ENCODE measurements at regions of chr1 and their contacts with region 1.

Region 1: DNA sequence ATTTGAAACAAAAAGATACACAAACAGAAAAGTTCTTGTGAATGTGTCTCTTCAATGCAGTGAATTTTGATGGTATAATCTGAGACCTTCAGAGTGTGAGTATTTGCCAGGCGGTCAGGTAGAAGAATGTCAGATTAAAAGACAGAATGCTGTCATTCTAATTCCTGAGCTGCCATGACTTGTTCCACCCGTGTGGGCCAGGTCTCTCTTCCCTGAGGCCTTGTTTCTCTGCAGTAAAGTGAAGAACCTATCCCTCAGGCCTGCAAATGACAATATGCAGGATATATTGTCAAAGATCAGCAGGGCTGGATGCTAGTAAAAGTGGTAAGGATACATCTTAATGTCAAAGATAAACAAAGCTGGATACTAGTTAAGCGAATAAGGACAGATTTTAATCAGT is 111.4 kb downstream of the ZP4 start:
- DNase-seq: no peak
- H3K4me3 ChIP-seq: no peak overlapping the region
- H3K27ac ChIP-seq: no peak overlapping the region
- H3K4me1 ChIP-seq: no peaks in the 10 kb centered on the region
- H3K27me3 ChIP-seq: no peaks in the 10 kb centered on the region
- CTCF ChIP-seq: no peak
- EP300 ChIP-seq: no peak
- POLR2A ChIP-seq: no peak

Region 2: GRCh38 chr1:237737938-237738610 is 41.3 kb before region 1 on chr1:
- intact Hi-C with region 1: loop called in 1 of 4 experiments (anchors 2 kb)
- DNase-seq: no peak
- H3K4me3 ChIP-seq: no peak overlapping the region
- H3K27ac ChIP-seq: no peak overlapping the region
- H3K4me1 ChIP-seq: no peaks in the 10 kb centered on the region
- H3K27me3 ChIP-seq: no peaks in the 10 kb centered on the region
- CTCF ChIP-seq: no peak
- EP300 ChIP-seq: no peak
- POLR2A ChIP-seq: no peak

Region 3: GRCh38 chr1:238029126-238029525 is 249.8 kb after region 1 on chr1:
- intact Hi-C with region 1: no loop called
- DNase-seq: no peak
- H3K4me3 ChIP-seq: no peak overlapping the region
- H3K27ac ChIP-seq: no peak overlapping the region
- H3K4me1 ChIP-seq: no peaks in the 10 kb centered on the region
- H3K27me3 ChIP-seq: no peaks in the 10 kb centered on the region
- CTCF ChIP-seq: no peak
- EP300 ChIP-seq: no peak
- POLR2A ChIP-seq: no peak